ENCODE measurements at regions of chr1 and their contacts with region 1.

Region 1: DNA sequence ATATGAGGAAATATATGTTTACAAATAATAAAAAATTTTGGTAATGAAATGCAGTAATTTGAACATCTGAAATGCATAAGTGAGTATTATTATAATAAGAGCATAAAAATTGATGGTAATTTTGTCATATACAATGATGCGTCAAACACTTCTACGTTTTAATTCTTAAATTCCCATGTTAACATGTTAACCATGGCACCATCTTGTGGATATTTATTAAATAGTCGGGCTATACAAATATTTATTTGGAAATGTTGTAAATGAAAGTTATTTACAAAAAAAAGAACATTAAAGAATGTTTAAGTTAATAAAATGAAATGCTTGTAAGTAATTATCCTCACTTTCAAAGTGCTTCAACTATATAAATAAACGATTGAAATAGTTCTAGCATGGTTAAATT is 57.2 kb upstream of the C1orf185 start:
- DNase-seq: no peak
- H3K4me3 ChIP-seq: no peak overlapping the region
- H3K27ac ChIP-seq: no peak overlapping the region
- H3K4me1 ChIP-seq: no peaks in the 10 kb centered on the region
- H3K27me3 ChIP-seq: no peaks in the 10 kb centered on the region
- CTCF ChIP-seq: peak; percentile 30 to 41

Region 2: DNA sequence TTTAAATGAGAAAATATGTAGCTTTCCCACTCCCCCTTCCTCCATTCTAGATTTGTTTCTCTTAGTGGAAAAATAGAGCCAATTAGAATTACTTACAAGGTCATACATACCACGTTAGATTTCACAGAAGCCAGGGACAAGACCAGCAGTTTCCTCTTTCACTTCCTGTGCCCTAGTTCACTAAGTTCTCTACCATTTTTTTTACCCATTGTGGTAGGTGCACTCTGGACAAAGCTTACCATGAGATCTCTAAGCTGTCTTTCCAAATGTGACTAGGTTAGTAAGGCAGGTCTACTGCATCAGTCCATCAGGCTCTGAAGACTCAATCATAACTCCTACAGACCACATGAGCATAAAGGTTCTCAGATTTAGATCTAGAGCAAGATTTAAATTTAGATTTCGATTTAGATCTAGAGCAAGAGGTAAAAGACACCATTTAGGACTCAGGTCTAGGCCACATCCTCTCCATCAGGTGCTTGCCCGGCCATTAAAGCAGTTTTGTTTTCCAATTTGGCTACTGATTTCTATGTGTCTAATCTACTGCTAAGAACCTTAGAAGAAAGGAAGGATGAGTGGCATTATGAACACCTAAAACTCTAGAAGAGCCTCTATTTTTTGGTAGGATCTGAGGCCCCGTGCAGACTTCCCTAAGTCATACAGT is 320.1 kb before region 1 on chr1:
- intact Hi-C with region 1: no loop called
- DNase-seq: no peak
- H3K4me3 ChIP-seq: no peak overlapping the region
- H3K27ac ChIP-seq: no peak overlapping the region
- H3K4me1 ChIP-seq: no peaks in the 10 kb centered on the region
- H3K27me3 ChIP-seq: no peaks in the 10 kb centered on the region
- CTCF ChIP-seq: no peak

Region 3: GRCh38 chr1:50774759-50775351 is 270.0 kb before region 1 on chr1:
- intact Hi-C with region 1: loop called (anchors 5 kb)
- DNase-seq: no peak
- H3K4me3 ChIP-seq: no peak overlapping the region
- H3K27ac ChIP-seq: no peak overlapping the region
- H3K4me1 ChIP-seq: no peaks in the 10 kb centered on the region
- H3K27me3 ChIP-seq: no peaks in the 10 kb centered on the region
- CTCF ChIP-seq: peak; percentile 59 to 67

Measured in tibial artery (tissue), 4 donors.